ENCODE measurements at regions of chr4 and their contacts with region 1.

Region 1: DNA sequence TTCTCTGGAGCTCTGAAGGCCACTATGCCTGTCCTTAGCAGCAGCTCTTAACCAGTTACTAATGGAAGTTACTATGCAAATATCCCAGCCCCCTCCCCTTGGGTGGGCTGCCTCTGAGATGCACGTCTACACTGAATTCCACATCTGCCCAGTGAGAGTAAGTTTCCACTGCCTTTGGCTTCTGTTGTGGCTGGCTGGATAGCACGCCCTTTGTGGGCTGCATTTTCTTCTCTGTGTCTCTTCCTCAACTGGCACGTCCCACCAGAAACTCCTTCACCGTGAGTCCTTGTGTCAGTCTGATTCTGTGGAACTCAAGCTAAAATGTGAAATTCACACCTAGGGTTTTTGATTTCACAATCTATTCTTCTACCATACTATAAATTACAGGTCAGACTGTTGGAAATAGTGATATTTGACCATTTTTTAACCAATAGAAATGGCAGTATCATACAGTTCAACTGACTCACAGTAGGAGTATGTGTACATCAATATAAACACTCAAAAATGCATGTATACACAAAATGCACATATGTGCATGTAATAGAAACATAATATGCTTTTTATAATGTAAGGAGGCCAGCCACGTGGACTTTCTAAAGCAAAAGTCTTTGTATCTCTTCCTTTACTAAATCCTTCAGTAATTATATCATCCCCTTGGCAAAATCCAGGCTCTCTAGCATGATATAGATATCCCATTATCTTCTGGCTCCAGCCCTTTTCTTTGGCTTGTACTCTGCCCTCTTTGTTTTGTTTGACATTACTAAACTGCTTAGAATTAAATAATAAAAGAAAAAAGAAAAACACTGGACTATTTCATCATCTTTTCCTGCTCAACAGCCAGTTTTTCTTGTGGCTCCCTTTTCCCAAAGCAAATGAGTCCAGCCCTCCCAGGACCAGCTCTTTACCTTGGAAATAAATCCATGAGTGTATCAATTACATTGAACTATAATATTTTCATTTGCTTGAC is 33.2 kb upstream of the LDB2 start:
- DNase-seq: peak; percentile 69
- ATAC-seq: peak; percentile 95
- H3K4me3 ChIP-seq: no peak overlapping the region
- H3K27ac ChIP-seq: peak overlapping the region; percentile 42; the same call in 1 of the 2 replicates
- H3K4me1 ChIP-seq: peaks cover 7% of the 10 kb centered on the region; the same call in 1 of the 2 replicates
- H3K27me3 ChIP-seq: no peaks in the 10 kb centered on the region
- CTCF ChIP-seq: no peak
- POLR2A ChIP-seq: no peak
- RAD21 ChIP-seq: no peak

Region 2: DNA sequence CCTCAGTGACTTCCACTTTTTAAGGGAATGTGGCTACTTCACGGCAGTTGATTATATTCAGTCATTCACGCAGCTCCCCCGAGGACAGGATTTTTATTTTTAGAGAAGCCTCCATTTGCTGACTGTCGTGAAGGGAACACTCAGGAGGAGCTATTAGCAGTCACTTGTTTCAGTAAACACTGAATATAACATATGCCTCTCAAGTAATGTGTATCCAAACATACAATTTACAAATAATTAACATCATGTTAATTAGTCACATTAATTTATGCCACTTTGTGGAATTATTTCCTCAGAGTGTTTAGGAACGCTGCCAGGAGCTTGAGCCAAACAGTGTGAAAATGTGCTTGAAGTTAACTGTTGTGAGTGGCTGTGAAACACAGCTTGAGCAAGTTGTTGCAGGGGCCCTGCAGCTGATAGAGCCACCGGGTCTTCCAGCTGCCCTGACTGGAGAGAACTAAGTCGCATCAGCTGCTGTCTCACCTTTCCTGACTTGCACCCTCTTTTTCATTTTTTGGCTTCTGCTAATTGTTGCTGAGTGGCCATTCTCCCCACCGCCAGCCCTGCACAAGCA is 278.8 kb before region 1 on chr4:
- CTCF ChIA-PET with region 1: no interaction called
- POLR2A ChIA-PET with region 1: interaction called, 13 read pairs
- dilution Hi-C with region 1: no loop called
- in situ Hi-C with region 1: no loop called
- intact Hi-C with region 1: no loop called
- DNase-seq: no peak
- ATAC-seq: no peak
- H3K4me3 ChIP-seq: no peak overlapping the region
- H3K27ac ChIP-seq: no peak overlapping the region
- H3K4me1 ChIP-seq: no peaks in the 10 kb centered on the region
- H3K27me3 ChIP-seq: no peaks in the 10 kb centered on the region
- CTCF ChIP-seq: no peak
- POLR2A ChIP-seq: no peak
- RAD21 ChIP-seq: no peak

Region 3: DNA sequence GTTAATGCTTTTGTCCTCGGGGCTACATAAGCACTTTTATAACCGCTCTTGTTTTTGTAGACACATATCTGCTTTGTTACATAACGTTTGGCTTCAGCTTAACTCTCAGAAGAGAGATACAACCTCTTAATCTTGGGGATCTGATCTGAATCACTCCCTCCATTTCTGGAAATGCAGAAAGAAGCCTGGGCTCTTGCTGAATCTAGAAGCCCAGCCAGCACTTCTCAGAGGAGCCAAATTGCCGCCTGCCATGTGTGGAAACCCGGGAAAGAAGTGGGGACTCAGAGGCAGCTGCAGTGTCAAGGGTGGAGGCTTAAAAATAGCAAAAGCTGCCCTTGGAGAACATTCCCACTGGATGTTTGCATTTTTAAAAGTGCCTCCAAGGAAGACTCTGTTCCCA is 36.1 kb after region 1 on chr4:
- CTCF ChIA-PET with region 1: no interaction called
- POLR2A ChIA-PET with region 1: no interaction called
- dilution Hi-C with region 1: no loop called
- in situ Hi-C with region 1: no loop called
- intact Hi-C with region 1: no loop called
- DNase-seq: peak; percentile 10
- ATAC-seq: no peak
- H3K4me3 ChIP-seq: no peak overlapping the region
- H3K27ac ChIP-seq: no peak overlapping the region
- H3K4me1 ChIP-seq: peaks cover 5% of the 10 kb centered on the region; the same call in 1 of the 2 replicates
- H3K27me3 ChIP-seq: no peaks in the 10 kb centered on the region
- CTCF ChIP-seq: no peak
- POLR2A ChIP-seq: no peak
- RAD21 ChIP-seq: no peak